Calu3 (cell line): ENCODE measurements at regions of chr11 and their contacts with region 1.

Region 1: DNA sequence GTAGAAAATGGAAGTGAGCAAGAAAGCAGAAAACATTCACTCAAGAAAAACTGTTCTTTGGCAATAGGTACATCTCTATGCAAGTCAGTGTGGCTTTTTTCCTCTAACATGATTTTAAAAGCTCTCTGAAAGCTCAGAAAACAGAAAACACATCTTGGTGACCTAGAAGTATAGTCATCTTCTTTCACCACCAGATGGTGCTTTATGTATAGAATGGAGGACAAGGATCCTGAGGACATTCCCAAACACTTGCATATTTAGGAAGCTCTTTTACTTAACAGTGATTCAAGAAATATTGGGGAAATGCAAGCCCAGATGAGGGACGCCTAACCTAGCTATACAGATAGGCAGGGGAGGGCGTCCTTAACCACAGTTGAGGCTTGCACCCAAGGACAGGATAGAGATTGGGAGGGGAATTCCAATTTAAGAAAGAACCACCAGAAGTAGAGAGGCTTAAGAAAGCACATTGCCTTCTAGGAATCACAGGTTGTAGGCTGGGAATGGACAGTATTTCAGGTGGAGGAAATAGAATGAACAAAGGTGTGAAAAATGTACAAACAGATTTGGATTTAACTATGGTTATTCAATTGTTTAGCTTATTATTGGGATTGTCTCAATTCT is 13.8 kb upstream of the CCDC81 start:
- DNase-seq: no peak
- H3K4me3 Mint-ChIP-seq: no peak overlapping the region
- H3K27ac Mint-ChIP-seq: no peak overlapping the region
- H3K4me1 Mint-ChIP-seq: no peaks in the 10 kb centered on the region
- H3K27me3 Mint-ChIP-seq: no peaks in the 10 kb centered on the region
- CTCF ChIP-seq: no peak

Region 2: GRCh38 chr11:85647604-85648299 is 713.1 kb before region 1 on chr11 and contains the start of gene TMEM126A:
- CTCF ChIA-PET with region 1: no interaction called
- intact Hi-C with region 1: no loop called
- DNase-seq: peak; percentile 89
- H3K4me3 Mint-ChIP-seq: peak within 1 kb of the TSS; percentile 85
- H3K27ac Mint-ChIP-seq: peak within 1 kb of the TSS; percentile 88
- H3K4me1 Mint-ChIP-seq: no peaks in the 10 kb centered on the region
- H3K27me3 Mint-ChIP-seq: no peaks in the 10 kb centered on the region
- CTCF ChIP-seq: no peak
- total RNA-seq, gene TMEM126A: 20.9 and 22.9 TPM in 2 replicates

Region 3: DNA sequence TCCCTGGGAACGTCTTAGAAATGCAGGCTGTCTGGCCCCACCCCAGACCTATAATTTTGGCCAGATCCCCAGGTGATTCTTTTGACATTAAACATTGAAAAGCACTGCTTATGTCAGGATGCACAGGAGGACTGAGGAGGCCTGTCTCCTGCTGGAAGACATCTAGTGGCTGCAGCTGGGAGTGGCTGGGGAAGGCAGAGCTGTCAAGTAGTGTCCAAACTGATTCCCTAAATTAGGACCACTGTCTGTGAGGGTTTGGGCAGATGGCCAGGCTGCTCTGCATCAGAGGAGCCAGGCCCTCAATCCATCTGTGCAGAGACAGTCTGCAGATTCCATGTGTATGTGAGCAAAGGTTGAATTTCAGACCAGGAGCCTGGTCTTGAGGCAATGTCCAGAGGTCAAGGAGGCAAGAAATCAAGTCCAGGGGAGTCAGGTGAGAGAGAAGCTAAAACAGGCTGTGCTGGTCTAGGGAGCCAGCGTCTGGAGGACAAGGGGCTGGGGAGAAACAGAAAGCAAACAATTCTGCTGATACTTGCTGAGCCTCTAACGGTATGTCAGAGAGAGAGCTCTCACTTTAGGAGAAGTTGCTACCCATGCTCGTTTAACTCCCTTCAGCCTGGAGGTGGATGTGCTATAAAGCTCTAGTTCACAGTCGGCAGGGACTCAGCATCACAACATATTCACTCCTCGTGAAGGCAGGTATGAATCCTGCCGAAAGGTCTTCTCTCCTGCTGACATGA is 534.6 kb before region 1 on chr11:
- CTCF ChIA-PET with region 1: no interaction called
- intact Hi-C with region 1: no loop called
- DNase-seq: peak; percentile 34
- H3K4me3 Mint-ChIP-seq: no peak overlapping the region
- H3K27ac Mint-ChIP-seq: no peak overlapping the region
- H3K4me1 Mint-ChIP-seq: peaks cover 33% of the 10 kb centered on the region
- H3K27me3 Mint-ChIP-seq: no peaks in the 10 kb centered on the region
- CTCF ChIP-seq: no peak

Region 4: DNA sequence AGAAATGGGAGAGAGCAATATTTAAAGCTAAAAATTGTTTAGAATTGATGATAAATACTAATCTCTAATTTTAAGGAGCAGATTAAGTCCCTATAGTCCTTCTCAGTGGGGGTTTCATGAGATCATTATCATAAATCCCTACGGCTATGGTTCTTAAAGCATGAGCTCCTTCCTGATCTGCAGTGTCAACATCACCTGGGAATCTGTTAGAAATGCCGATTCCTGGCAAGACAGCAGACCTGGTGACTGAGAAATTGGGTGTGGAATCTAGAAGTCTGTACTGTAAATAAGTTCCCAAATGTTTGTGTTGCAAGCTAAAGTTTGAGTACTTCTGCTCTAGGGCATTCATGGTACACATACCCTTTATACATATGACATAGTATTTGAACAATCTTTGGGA is 46.2 kb before region 1 on chr11:
- CTCF ChIA-PET with region 1: no interaction called
- intact Hi-C with region 1: no loop called
- DNase-seq: no peak
- H3K4me3 Mint-ChIP-seq: no peak overlapping the region
- H3K27ac Mint-ChIP-seq: no peak overlapping the region
- H3K4me1 Mint-ChIP-seq: no peaks in the 10 kb centered on the region
- H3K27me3 Mint-ChIP-seq: no peaks in the 10 kb centered on the region
- CTCF ChIP-seq: no peak

Region 5: GRCh38 chr11:86408845-86409244 is 48.0 kb after region 1 on chr11:
- CTCF ChIA-PET with region 1: no interaction called
- intact Hi-C with region 1: loop called (anchors 5 kb)
- DNase-seq: no peak
- H3K4me3 Mint-ChIP-seq: no peak overlapping the region
- H3K27ac Mint-ChIP-seq: no peak overlapping the region
- H3K4me1 Mint-ChIP-seq: no peaks in the 10 kb centered on the region
- H3K27me3 Mint-ChIP-seq: no peaks in the 10 kb centered on the region
- CTCF ChIP-seq: no peak